Dendritic cell treated with granulocyte-macrophage colony-stimulating factor and Interleukin-4, amounts not matched to agents 40 ng/mL and 50 ng/mL, for 4 days (primary cell): ENCODE measurements at regions of chr22 and their contacts with region 1.

Region 1: GRCh38 chr22:41285820-41286638 is at the start of gene RANGAP1:
- H3K4me3 Mint-ChIP-seq: peak within 1 kb of the TSS; percentile 81
- H3K27ac Mint-ChIP-seq: peak within 1 kb of the TSS; percentile 86
- H3K4me1 Mint-ChIP-seq: peaks cover 37% of the 10 kb centered on the region
- H3K27me3 Mint-ChIP-seq: no peaks in the 10 kb centered on the region

Region 2: DNA sequence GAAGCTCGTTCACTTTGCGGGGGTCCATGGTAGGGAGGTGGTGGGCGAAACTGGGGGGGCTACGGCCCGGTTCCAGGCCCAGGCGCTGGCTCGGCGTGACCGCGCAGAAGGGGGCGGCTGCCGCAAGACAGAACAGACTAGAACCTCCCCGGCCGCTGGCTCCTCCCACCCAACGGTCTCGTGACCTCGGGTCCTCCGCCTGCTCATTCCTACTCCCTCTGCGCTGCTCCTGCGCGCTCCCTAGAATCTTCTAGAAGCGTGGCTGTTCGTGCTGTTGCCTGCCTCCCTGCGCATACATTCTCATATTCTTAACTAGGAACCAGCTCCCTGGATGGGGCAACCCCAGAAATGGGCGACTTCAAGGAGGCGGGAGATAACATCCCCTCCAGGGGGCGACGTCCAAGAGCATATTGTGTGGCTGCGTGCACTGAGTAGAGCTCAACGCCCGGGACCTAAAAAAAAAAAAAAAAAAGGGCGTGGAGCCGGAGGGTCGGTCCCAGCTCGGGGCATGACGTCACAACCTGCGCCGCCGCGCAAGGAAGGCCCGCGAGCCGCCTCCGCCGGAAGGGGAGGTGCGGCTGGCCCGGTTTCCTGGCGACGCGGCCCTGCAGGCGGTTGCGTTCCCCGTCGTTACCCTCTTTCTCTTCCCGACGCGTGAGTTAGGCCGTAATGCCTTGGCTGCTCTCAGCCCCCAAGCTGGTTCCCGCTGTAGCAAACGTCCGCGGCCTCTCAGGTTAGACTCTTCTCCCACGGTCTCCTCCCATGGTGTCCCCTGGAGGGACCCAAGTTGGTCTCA is 429.3 kb before region 1 on chr22 and contains the starts of genes ST13 and XPNPEP3:
- intact Hi-C with region 1: loop called (anchors 5 kb)
- H3K4me3 Mint-ChIP-seq: peak within 1 kb of the TSS; percentile 99
- H3K27ac Mint-ChIP-seq: peak within 1 kb of the TSS; percentile 99
- H3K4me1 Mint-ChIP-seq: peaks cover 34% of the 10 kb centered on the region
- H3K27me3 Mint-ChIP-seq: no peaks in the 10 kb centered on the region

Region 3: DNA sequence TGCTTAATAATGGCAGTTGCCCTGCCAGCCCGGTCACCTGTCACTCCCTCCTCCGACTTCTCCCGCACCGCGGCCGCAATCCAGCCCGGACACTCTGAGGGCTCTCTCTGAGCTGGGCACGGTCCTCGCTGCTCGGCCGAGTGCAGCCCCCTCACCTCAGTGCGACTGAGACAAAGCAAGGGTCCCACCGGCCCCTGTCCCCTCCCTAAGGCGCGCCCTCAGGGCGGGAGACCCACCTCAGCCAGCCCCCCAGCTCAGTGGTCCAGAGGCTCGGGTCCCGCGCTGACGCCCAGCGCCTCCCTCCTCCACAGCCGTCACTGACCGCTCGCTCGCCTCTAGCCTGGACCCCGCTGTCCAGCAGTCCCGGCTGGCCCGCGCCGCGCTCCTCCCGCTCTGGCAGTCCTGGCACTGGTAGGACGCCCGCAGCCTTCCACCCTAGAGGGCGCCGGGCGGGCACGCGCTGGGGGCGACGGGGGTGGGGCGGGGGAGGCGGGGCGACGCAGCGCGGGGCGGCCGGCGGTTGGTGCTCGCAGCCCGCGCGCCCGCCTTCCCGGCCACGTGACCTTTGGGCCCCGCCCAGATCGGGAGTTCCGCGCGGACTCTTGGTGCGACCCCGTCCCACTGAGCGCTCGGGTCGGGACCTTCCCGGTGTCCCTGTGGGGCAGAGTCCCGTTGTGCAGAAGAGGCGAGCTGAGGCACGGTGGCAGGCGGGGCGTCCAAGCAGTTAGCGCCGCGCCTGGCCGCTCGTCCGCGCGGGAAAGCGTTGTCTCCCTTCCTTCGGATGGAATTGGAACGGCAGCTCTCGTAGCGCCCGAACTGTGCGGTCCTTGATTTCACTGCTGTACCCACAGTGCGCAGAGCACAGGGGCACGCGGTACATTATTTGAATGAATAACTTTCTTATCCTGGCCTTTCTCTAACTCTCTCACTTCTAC is 88.7 kb before region 1 on chr22:
- intact Hi-C with region 1: loop called (anchors 10 kb)
- H3K4me3 Mint-ChIP-seq: peak overlapping the region; percentile 90
- H3K27ac Mint-ChIP-seq: peak overlapping the region; percentile 29
- H3K4me1 Mint-ChIP-seq: peaks cover 21% of the 10 kb centered on the region
- H3K27me3 Mint-ChIP-seq: peaks cover 32% of the 10 kb centered on the region

Region 4: GRCh38 chr22:41217553-41218157 is 68.4 kb before region 1 on chr22:
- intact Hi-C with region 1: loop called (anchors 5 kb)
- H3K4me3 Mint-ChIP-seq: peak overlapping the region; percentile 19
- H3K27ac Mint-ChIP-seq: peak overlapping the region; percentile 84
- H3K4me1 Mint-ChIP-seq: peaks cover 27% of the 10 kb centered on the region
- H3K27me3 Mint-ChIP-seq: no peaks in the 10 kb centered on the region

Region 5: DNA sequence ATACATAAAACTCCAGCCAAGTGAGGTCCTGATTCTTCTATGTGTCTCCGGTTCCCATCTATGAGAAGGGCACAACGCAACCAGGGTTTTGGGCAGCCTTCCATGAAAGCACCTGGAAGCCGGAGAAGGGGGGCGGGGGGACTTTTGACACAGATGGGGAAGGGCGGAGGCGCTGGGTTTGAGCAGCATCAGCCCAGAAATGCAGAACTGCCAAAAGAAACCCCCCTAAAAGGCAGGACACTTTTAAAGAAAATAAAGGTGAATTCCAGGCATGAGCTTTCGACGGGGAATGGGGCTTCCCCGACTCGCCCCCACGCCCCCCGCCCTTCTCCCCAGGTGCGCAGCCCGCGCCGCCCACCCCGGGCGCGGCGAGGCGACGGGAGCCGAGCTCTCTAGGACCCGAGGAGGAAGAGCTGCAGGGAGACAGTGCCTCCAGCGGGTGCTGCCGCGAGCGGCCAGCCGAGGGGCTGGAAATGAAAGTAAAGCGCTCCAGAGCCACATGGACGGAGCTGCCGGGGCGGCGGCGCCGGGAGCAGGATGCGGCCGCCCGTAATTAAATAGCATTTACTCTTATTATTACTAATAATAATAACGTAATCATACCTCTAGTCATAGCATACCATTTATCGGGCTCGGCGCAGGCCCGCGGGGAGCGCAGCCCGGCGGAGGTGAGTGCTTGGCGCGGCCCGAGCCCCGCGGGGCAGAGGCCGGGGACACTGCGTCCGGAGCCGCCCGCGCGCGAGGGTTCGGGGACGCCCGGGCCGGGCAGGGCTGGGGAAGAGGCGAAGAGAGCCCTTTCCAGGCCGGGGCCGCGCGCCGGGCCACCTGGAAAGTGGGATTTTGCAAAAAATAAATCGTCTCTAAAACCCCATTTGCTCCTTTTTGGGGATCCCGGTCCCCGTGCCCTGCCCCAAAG is 15.3 kb after region 1 on chr22 and contains the start of gene ZC3H7B:
- intact Hi-C with region 1: loop called (anchors 1 kb)
- H3K4me3 Mint-ChIP-seq: peak within 1 kb of the TSS; percentile 78
- H3K27ac Mint-ChIP-seq: peak within 1 kb of the TSS; percentile 80
- H3K4me1 Mint-ChIP-seq: peaks cover 28% of the 10 kb centered on the region
- H3K27me3 Mint-ChIP-seq: no peaks in the 10 kb centered on the region

Region 6: DNA sequence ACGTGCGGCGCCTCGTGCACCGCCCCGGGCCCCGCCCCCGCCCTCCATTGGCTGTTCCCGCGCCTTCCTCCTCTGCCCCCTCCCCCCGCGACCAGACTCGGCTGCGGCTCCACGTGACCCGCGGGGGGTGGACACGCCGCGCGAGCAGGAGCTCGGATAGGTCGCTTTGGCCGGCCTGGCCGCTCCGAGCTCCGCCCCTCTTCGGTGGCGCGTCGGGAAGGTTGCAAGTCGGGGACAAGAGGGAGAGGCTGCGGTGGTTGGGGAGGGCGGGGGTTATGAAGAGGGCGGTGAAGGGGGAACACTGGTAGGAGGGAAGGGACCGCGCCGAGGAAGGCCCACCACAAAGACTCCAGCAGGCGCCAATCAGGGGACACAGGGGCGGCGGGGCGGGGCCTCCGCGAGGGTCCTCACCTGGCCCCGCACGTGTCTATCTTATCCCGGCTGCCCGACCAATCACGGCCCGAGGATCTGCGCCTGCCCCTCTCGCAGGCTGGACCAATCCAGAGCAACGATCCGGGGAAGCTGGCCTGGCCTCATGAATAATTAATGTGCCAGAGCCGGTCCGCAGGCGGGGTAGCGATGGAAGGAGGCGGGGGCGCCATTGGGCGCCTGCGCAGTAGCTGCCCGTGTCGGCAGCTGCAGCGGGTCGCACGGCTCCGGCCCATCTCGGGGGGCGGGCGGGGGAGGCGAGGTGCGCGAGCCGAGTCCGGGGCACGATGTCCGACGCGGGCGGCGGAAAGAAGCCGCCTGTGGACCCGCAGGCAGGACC is 95.5 kb after region 1 on chr22 and contains the start of gene TEF:
- intact Hi-C with region 1: loop called (anchors 5 kb)
- H3K4me3 Mint-ChIP-seq: peak within 1 kb of the TSS; percentile 91
- H3K27ac Mint-ChIP-seq: peak within 1 kb of the TSS; percentile 98
- H3K4me1 Mint-ChIP-seq: peaks cover 37% of the 10 kb centered on the region
- H3K27me3 Mint-ChIP-seq: peaks cover 7% of the 10 kb centered on the region